HepG2 (cell line): ENCODE measurements at regions of chr14 and their contacts with region 1.

Region 1: GRCh38 chr14:88013750-88014349 is 8.9 kb downstream of the GPR65 start:
- DNase-seq: peak; percentile 66
- ATAC-seq: peak; percentile 99
- H3K4me3 ChIP-seq: no peak overlapping the region
- H3K27ac ChIP-seq: no peak overlapping the region
- H3K4me1 ChIP-seq: peaks cover 12% of the 10 kb centered on the region; the same call in 1 of the 2 replicates
- H3K27me3 ChIP-seq: no peaks in the 10 kb centered on the region
- CTCF ChIP-seq: peak; percentile 90
- EP300 ChIP-seq: no peak
- POLR2A ChIP-seq: no peak
- RAD21 ChIP-seq: peak; percentile 91

Region 2: DNA sequence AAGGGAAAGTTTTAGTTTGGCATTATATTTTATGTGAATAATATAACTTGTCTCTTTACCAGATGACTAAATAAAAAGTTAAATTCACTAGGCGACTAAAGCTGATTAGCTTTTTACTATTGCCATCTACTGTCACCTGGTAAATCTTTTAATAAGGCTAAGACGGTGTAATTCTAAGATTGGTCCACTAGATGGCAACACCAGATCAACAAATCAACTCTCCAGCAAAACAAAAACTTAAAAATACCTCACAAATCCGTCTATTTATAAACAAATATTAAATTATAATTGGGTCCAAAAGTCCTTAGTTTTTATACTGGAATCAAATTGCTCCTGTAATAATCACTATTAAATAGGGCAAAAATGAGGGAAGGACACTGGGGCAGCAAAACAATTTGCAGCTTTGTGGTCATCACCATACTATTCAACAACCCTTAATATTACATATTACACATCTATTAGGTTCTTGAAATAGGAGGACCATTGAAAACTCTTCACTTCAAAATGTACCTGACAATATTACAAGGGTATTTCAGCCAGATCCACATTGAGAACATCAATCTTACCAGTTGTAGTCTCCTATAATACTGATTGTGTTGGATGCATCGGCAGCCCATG is 68.8 kb before region 1 on chr14:
- CTCF ChIA-PET with region 1: interaction called, 3 read pairs
- POLR2A ChIA-PET with region 1: no interaction called
- in situ Hi-C with region 1: no loop called
- intact Hi-C with region 1: loop called (anchors 1 kb)
- DNase-seq: peak; percentile 29
- ATAC-seq: no peak
- H3K4me3 ChIP-seq: no peak overlapping the region
- H3K27ac ChIP-seq: no peak overlapping the region
- H3K4me1 ChIP-seq: no peaks in the 10 kb centered on the region
- H3K27me3 ChIP-seq: no peaks in the 10 kb centered on the region; a peak in 1 of 5 replicates
- CTCF ChIP-seq: peak; percentile 65
- EP300 ChIP-seq: no peak
- POLR2A ChIP-seq: no peak
- RAD21 ChIP-seq: no peak

Region 3: DNA sequence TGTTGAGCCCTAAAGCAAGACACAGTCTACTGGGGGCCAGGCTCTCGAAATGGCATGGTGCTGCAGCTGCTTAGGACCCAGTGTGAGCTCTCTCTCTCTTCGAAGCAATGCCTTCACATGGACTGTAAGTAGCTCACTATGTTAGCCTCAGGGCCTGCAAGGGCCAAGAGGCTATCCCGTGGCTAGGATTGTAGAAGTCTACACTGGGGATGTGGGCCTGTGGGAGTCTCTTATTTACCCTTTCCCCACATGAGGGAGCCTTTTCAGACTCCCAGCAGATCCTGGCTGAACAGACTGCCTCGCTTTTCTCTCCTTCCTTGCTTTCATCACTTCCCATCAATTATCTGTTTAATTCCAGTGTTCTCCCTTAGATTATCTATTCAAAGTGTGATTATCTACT is 92.5 kb after region 1 on chr14:
- CTCF ChIA-PET with region 1: no interaction called
- POLR2A ChIA-PET with region 1: no interaction called
- in situ Hi-C with region 1: no loop called
- intact Hi-C with region 1: loop called (anchors 10 kb)
- DNase-seq: no peak
- ATAC-seq: peak; percentile 52
- H3K4me3 ChIP-seq: no peak overlapping the region
- H3K27ac ChIP-seq: no peak overlapping the region
- H3K4me1 ChIP-seq: no peaks in the 10 kb centered on the region
- H3K27me3 ChIP-seq: no peaks in the 10 kb centered on the region
- CTCF ChIP-seq: no peak
- EP300 ChIP-seq: no peak
- POLR2A ChIP-seq: no peak
- RAD21 ChIP-seq: no peak

Region 4: DNA sequence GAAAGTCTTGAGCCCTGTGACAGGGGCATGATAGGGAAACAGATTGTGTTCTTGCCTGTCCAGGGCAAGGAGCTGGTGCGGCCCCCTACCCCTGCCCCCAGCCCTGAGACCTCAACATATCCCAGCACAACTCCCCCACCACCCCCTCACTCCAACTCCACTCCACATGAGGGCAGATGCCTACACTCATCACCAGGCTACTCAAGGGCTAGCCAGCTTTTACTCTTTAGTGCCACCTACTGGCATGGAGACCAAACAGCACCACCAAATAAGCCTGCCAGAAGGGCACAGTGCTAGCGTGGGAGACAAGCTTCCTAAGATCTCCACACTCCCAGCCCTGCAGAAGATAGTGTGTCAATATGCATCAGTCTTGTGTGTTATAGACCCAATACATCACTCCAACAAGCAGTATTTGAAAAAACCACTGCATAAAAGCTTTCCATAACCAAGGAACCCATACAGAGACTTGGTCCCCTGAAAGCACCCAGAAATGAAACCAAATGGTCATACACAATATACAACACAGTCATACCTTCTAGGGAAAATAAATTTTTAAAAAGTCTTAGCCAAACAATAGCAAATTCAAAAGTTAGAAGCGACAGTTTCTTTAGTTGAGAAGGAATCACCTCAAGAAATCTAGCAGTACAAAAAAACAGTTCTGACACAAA is 154.8 kb after region 1 on chr14:
- CTCF ChIA-PET with region 1: interaction called, 33 read pairs
- POLR2A ChIA-PET with region 1: no interaction called
- in situ Hi-C with region 1: loop called (anchors 5 kb)
- intact Hi-C with region 1: loop called (anchors 1 kb)
- DNase-seq: peak; percentile 50
- ATAC-seq: peak; percentile 95
- H3K4me3 ChIP-seq: no peak overlapping the region
- H3K27ac ChIP-seq: no peak overlapping the region
- H3K4me1 ChIP-seq: peaks cover 19% of the 10 kb centered on the region
- H3K27me3 ChIP-seq: no peaks in the 10 kb centered on the region
- CTCF ChIP-seq: peak; percentile 89
- EP300 ChIP-seq: no peak
- POLR2A ChIP-seq: no peak
- RAD21 ChIP-seq: peak; percentile 40; the same call in 1 of the 2 replicates

Region 5: GRCh38 chr14:88189417-88190191 is 175.8 kb after region 1 on chr14:
- CTCF ChIA-PET with region 1: no interaction called
- POLR2A ChIA-PET with region 1: no interaction called
- in situ Hi-C with region 1: no loop called
- intact Hi-C with region 1: loop called (anchors 5 kb)
- DNase-seq: peak; percentile 81
- ATAC-seq: peak; percentile 97
- H3K4me3 ChIP-seq: peak overlapping the region in 2 of 3 experiments; percentile 30 to 61; a peak in 4 of 6 replicates
- H3K27ac ChIP-seq: no peak overlapping the region
- H3K4me1 ChIP-seq: peaks cover 13% of the 10 kb centered on the region
- H3K27me3 ChIP-seq: peaks cover 1 to 15% of the 10 kb centered on the region in 2 experiments; a peak in 2 of 5 replicates
- CTCF ChIP-seq: peak; percentile 84
- EP300 ChIP-seq: no peak
- POLR2A ChIP-seq: no peak
- RAD21 ChIP-seq: peak; percentile 57; the same call in 1 of the 2 replicates

Region 6: GRCh38 chr14:88233915-88234314 is 220.1 kb after region 1 on chr14:
- CTCF ChIA-PET with region 1: interaction called, 15 read pairs
- POLR2A ChIA-PET with region 1: no interaction called
- in situ Hi-C with region 1: loop called (anchors 5 kb)
- intact Hi-C with region 1: loop called (anchors 1 kb)
- DNase-seq: peak; percentile 40
- ATAC-seq: peak; percentile 83
- H3K4me3 ChIP-seq: no peak overlapping the region
- H3K27ac ChIP-seq: no peak overlapping the region
- H3K4me1 ChIP-seq: no peaks in the 10 kb centered on the region
- H3K27me3 ChIP-seq: no peaks in the 10 kb centered on the region; a peak in 1 of 5 replicates
- CTCF ChIP-seq: peak; percentile 70
- EP300 ChIP-seq: no peak
- POLR2A ChIP-seq: no peak
- RAD21 ChIP-seq: peak; percentile 40

Region 7: GRCh38 chr14:88385345-88386101 is 371.7 kb after region 1 on chr14 and contains the start of gene SPATA7:
- CTCF ChIA-PET with region 1: interaction called, 3 read pairs
- POLR2A ChIA-PET with region 1: no interaction called
- in situ Hi-C with region 1: loop called (anchors 25 kb)
- intact Hi-C with region 1: no loop called
- DNase-seq: peak; percentile 83
- ATAC-seq: peak; percentile 97
- H3K4me3 ChIP-seq: peak within 1 kb of the TSS; percentile 81 to 90 (median 90)
- H3K27ac ChIP-seq: peak within 1 kb of the TSS; percentile 61
- H3K4me1 ChIP-seq: peaks cover 16% of the 10 kb centered on the region
- H3K27me3 ChIP-seq: no peaks in the 10 kb centered on the region
- CTCF ChIP-seq: peak; percentile 22; the same call in 1 of the 2 replicates
- EP300 ChIP-seq: no peak
- POLR2A ChIP-seq: peak; percentile 43 to 88; a peak in 3 of 4 replicates
- RAD21 ChIP-seq: peak; percentile 31; the same call in 1 of the 2 replicates
- total RNA-seq, gene SPATA7: 4.9 and 5.5 TPM in 2 replicates